PC-9 (cell line): ENCODE measurements at regions of chr5 and their contacts with region 1.

Region 1: GRCh38 chr5:41305056-41305455 is 91.7 kb upstream of the C6 start:
- DNase-seq: no peak
- H3K4me3 ChIP-seq: no peak overlapping the region
- H3K27ac ChIP-seq: no peak overlapping the region
- H3K4me1 ChIP-seq: no peaks in the 10 kb centered on the region
- H3K27me3 ChIP-seq: no peaks in the 10 kb centered on the region
- CTCF ChIP-seq: no peak

Region 2: DNA sequence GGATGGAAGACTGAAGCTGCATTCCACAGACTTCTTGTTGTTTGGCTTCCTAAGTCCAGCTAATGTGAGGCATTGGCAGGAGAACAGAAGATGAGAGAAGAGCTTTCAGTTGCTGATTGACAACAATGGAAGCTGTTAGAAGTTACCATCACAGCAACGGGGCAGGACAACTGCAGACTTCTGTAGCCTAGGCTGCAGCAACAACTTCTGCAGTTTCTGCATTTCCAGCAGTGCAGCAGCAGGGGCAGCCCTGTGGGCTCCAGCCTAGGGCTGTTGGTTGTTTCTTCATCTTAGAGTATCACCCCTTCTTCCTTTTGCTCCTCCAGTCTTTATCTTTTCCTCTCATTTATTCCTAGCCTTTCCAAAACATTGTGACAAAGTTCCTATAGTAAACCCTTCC is 1154.2 kb before region 1 on chr5:
- CTCF ChIA-PET with region 1: no interaction called
- POLR2A ChIA-PET with region 1: no interaction called
- intact Hi-C with region 1: no loop called
- DNase-seq: no peak
- H3K4me3 ChIP-seq: no peak overlapping the region
- H3K27ac ChIP-seq: no peak overlapping the region
- H3K4me1 ChIP-seq: no peaks in the 10 kb centered on the region
- H3K27me3 ChIP-seq: no peaks in the 10 kb centered on the region
- CTCF ChIP-seq: no peak

Region 3: DNA sequence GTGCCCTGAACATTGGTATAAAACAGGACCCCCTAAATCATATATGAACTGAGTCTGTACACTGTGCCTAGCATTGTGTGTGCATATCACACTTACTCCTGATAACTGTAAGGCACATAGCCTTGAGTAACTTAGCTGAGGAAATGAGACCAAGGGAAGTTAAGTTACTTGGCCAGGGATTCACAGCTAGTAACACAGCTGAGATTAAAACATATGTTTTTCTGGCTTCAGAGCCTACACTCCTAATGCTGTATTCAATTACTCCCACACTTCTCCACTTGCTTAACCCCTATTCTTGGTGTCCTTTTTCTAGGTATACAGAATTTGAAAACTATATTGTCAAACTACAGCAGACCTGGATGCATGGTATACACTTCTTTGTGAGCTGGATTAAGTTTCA is 1131.0 kb after region 1 on chr5:
- CTCF ChIA-PET with region 1: no interaction called
- POLR2A ChIA-PET with region 1: no interaction called
- intact Hi-C with region 1: loop called (anchors 5 kb)
- DNase-seq: no peak
- H3K4me3 ChIP-seq: no peak overlapping the region
- H3K27ac ChIP-seq: no peak overlapping the region
- H3K4me1 ChIP-seq: no peaks in the 10 kb centered on the region
- H3K27me3 ChIP-seq: no peaks in the 10 kb centered on the region
- CTCF ChIP-seq: no peak